ENCODE measurements at regions of chr4 and their contacts with region 1.

Region 1: DNA sequence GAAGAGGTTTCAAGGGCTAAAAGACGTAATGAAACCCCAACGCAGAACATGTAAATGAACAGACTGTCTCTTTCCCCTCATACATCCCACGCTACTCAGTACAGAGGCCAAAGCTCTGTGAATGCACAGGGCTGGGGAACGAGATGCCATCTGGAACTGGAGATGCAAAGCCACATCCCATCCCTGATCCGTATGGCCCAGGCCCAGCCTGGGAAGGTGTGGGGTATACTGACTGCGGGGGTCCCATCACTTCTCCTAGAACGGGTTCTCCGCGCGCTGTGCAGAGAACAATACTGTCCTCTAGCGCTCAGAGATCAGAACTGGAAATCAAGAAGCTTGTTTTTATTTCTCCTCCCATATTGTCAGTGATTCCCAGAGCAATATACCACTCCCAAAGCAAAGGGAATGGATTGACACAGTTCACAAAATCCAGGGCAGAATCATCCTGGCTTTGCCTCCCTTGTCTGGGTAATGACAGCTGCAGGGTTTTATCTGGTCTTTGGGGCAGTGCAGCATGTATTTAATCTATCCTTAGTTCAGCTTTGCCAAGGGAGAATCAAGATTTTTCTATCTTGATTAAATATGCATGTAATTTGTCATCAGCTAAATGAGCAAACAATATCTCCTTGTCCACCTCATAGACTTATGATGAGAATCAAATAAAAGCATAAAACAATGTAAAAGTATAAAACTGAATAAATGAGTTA is 47.3 kb upstream of the TLR3 start:
- DNase-seq: no peak

Region 2: GRCh38 chr4:185640811-185641675 is 380.6 kb before region 1 on chr4:
- intact Hi-C with region 1: loop called (anchors 5 kb)
- DNase-seq: no peak

Region 3: DNA sequence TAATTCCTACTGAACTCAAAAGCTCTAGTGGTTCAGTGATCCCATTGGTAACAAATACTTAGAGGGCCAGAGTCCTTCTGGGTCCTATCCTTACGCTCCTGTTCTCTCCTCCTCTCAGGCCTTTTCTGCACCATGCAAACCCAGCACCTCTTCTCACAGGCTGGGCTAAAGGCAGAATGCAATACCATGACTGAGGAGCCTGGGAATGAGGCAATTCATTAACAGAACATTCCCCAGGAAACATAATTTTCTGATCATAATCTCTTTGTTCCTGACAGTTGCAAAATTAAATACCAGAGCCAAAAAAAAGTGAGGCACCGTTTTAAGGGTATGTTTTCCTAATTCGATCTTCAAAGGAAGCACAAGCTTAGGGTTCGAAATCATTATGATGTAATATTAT is 218.6 kb before region 1 on chr4:
- intact Hi-C with region 1: loop called (anchors 5 kb)
- DNase-seq: no peak

Region 4: GRCh38 chr4:185892165-185892564 is 129.4 kb before region 1 on chr4:
- intact Hi-C with region 1: loop called (anchors 5 kb)
- DNase-seq: no peak